Vagina (tissue), 2 donors: ENCODE measurements at regions of chr14 and their contacts with region 1.

Region 1: GRCh38 chr14:94001501-94002396 is 4.6 kb downstream of the CCDC197 start:
- DNase-seq: no peak
- H3K4me3 ChIP-seq: no peak overlapping the region
- H3K27ac ChIP-seq: no peak overlapping the region
- H3K4me1 ChIP-seq: no peaks in the 10 kb centered on the region
- H3K27me3 ChIP-seq: no peaks in the 10 kb centered on the region
- CTCF ChIP-seq: peak; percentile 93 to 96 (median 93)
- POLR2A ChIP-seq: no peak

Region 2: DNA sequence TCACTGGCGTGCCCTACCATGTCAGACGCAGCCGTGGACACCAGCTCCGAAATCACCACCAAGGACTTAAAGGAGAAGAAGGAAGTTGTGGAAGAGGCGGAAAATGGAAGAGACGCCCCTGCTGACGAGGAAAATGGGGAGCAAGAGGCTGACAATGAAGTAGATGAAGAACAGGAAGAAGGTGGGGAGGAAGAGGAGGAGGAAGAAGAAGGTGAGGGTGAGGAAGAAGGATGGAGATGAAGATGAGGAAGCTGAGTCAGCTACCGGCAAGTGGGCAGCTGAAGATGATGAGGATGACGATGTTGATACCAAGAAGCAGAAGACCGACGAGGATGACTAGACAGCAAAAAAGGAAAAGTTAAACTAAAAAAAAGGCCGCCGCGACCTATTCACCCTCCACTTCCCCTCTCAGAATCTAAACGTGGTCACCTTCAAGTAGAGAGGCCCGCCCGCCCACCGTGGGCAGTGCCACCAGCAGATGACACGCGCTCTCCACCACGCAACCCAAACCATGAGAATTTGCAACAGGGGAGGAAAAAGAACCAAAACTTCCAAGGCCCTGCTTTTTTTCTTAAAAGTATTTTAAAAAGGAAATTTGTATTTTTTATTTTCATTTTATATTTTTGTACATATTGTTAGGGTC is 1975.1 kb before region 1 on chr14:
- intact Hi-C with region 1: no loop called
- DNase-seq: no peak
- H3K4me3 ChIP-seq: no peak overlapping the region
- H3K27ac ChIP-seq: no peak overlapping the region
- H3K4me1 ChIP-seq: no peaks in the 10 kb centered on the region
- H3K27me3 ChIP-seq: no peaks in the 10 kb centered on the region
- CTCF ChIP-seq: no peak
- POLR2A ChIP-seq: no peak

Region 3: DNA sequence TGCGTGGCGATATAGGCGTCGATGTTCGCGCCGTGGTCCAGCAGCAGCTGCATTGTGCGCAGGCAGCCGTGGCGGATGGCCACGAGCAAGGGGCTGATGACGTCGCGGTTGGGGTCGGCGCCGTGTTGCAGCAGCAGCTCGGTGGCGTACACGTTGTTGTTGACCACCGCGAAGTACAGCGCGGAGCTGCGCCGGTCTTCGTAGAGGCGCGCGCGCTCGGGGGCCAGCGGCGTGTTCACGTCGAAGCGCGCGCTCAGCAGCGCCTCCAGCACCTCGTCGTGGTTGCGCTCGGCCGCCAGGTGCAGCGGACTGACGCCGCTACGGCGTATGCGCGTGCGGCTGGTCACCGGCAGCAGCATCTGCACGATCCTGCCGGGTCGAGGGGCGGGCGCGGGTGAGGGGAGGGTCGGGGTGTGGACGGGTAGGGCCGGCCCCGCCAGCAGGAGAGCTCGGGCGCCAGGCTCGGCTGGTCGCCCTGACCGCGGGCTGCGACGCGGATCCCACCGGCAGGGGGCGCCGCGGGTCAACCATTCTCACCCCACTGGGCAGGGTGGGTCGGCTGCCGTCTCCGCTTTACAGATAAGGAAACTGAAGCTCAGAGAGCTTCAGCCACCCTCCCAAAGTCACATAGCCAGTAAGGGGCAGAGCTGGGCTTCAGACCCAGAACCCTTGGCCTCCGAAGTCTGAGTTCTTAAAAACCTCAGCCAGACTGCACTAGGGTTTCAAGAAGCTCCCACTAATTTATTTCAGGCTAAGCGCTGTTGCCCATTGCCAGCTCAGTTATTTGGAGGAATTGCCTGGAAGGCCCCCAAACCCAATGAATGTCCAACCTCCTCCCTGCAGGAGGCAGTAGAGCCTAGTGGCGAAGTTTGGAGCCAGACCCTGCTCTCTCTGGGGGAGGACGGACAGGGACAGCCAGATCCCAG is 62.2 kb before region 1 on chr14:
- intact Hi-C with region 1: loop called (anchors 2 kb)
- DNase-seq: no peak
- H3K4me3 ChIP-seq: peak overlapping the region; percentile 27 to 38
- H3K27ac ChIP-seq: peak overlapping the region; percentile 4
- H3K4me1 ChIP-seq: peaks cover 15% of the 10 kb centered on the region
- H3K27me3 ChIP-seq: no peaks in the 10 kb centered on the region
- CTCF ChIP-seq: peak; percentile 68 to 92 (median 85)
- POLR2A ChIP-seq: no peak